T-cell (primary cell): ENCODE measurements at regions of chr12 and their contacts with region 1.

Region 1: DNA sequence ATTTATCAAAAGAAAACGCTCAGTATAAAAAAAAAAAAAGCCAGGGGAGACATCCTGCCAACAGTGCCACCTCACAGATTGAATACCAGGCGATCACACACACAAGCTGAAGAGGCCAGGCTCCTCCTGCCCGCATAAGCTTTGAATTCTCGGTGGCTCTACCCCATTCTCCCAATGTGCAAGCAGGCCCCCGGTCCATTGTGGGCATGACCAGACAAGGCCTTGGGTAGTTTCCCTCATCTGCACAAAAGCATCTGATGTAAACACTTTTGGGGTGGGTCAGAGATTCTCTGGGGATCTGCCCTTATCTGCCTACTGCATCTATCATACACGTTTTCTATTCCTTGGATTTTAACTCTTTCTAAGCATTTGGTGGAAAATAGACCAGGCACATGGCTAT is 16.2 kb downstream of the KLRF2 start:
- DNase-seq: no peak
- ATAC-seq: no peak
- H3K4me3 ChIP-seq: no peak overlapping the region
- H3K4me3 Mint-ChIP-seq: no peak overlapping the region
- H3K27ac ChIP-seq: no peak overlapping the region
- H3K27ac Mint-ChIP-seq: no peak overlapping the region
- H3K4me1 ChIP-seq: no peaks in the 10 kb centered on the region
- H3K4me1 Mint-ChIP-seq: peaks cover 1 to 5% (median 3%) of the 10 kb centered on the region in 3 donors
- H3K27me3 ChIP-seq: no peaks in the 10 kb centered on the region
- H3K27me3 Mint-ChIP-seq: peaks cover 0 to 7% of the 10 kb centered on the region in 2 donors

Region 2: DNA sequence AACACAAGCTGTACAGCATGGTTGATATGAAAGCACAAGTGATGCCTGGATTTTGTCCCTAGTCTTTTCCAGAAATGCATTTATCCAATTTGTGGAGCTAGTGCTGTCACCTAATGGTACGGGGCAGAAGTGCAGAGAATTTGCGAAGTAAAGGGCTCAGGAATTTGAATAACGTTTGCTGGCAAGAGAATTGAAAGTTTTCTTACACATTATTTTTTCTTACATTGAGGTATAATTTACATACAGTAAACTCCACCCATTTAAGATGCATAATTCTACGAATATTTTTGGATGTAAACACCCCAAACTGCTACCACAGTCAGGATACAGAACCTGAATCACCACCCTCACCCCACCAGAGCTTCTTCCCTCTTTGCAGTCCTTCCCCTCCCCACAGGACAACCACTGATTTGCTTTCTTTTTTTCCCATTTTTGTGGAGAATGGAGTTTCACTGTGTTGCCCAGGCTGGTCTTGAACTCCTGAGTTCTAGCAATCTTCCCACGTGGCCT is 1288.4 kb before region 1 on chr12:
- CTCF ChIA-PET with region 1: no interaction called
- POLR2A ChIA-PET with region 1: no interaction called
- DNase-seq: peak in 1 of 35 experiments; percentile 34
- ATAC-seq: peak in 1 of 4 experiments; percentile 36
- H3K4me3 ChIP-seq: no peak overlapping the region
- H3K4me3 Mint-ChIP-seq: peak overlapping the region; percentile 47 to 75 (median 64)
- H3K27ac ChIP-seq: no peak overlapping the region
- H3K27ac Mint-ChIP-seq: no peak overlapping the region
- H3K4me1 ChIP-seq: peaks cover 0 to 4% of the 10 kb centered on the region in 2 experiments
- H3K4me1 Mint-ChIP-seq: peaks cover 11% of the 10 kb centered on the region in 3 donors
- H3K27me3 ChIP-seq: peaks cover 0 to 9% of the 10 kb centered on the region in 2 experiments
- H3K27me3 Mint-ChIP-seq: peaks cover 5 to 9% of the 10 kb centered on the region in 2 donors

Region 3: DNA sequence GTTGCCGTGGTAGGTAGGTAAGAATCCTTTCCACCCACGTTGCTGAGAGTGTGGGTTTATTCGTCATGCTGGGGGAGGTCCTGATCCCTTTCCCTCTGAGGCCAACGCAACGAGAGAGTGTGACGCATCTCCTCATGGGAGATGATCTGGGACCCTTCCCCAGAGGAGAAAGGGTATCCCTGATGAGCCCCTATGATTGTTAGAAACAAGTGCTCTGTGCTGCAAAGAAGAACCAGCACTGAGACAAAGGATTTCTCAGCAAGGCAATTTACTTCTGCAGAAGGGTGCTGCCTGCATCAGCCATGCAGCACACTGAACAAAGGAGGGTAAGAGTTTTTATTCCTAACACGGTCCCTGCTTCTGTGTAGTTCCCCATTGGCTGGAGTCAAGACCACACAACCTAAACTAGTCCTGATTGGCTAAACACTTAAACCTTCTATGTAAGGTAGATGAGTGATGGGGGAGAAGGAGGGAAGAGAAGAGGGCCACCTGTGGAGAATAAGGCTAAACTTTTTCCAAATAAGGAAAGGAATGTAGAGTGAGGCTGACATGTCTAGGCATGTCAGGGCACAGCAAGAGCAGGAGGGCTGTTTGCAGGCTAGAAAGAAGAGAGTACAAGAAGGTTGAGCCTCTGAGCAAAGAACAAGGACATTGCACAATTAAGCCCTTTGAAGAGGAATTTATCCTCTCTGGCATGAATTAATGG is 13.3 kb after region 1 on chr12:
- CTCF ChIA-PET with region 1: interaction called in 1 of 2 experiments, 7 read pairs
- POLR2A ChIA-PET with region 1: interaction called in 1 of 2 experiments, 11 read pairs
- DNase-seq: no peak
- ATAC-seq: no peak
- H3K4me3 ChIP-seq: no peak overlapping the region
- H3K4me3 Mint-ChIP-seq: no peak overlapping the region
- H3K27ac ChIP-seq: no peak overlapping the region
- H3K27ac Mint-ChIP-seq: peak overlapping the region in 1 of 2 donors; percentile 74
- H3K4me1 ChIP-seq: peaks cover 7 to 17% of the 10 kb centered on the region in 2 experiments
- H3K4me1 Mint-ChIP-seq: peaks cover 34 to 40% (median 35%) of the 10 kb centered on the region in 3 donors
- H3K27me3 ChIP-seq: no peaks in the 10 kb centered on the region
- H3K27me3 Mint-ChIP-seq: no peaks in the 10 kb centered on the region

Region 4: GRCh38 chr12:9925708-9926393 is 28.3 kb after region 1 on chr12:
- CTCF ChIA-PET with region 1: no interaction called
- POLR2A ChIA-PET with region 1: interaction called in 1 of 2 experiments, 15 read pairs
- DNase-seq: peak in 11 of 35 experiments; percentile 2 to 68 (median 15)
- ATAC-seq: peak in 3 of 4 experiments; percentile 48 to 66 (median 63)
- H3K4me3 ChIP-seq: peak overlapping the region; percentile 16 to 38
- H3K4me3 Mint-ChIP-seq: peak overlapping the region; percentile 47 to 72 (median 60)
- H3K27ac ChIP-seq: no peak overlapping the region
- H3K27ac Mint-ChIP-seq: no peak overlapping the region
- H3K4me1 ChIP-seq: peaks cover 2 to 3% of the 10 kb centered on the region in 2 experiments
- H3K4me1 Mint-ChIP-seq: peaks cover 13 to 25% (median 15%) of the 10 kb centered on the region in 3 donors
- H3K27me3 ChIP-seq: no peaks in the 10 kb centered on the region
- H3K27me3 Mint-ChIP-seq: peaks cover 4 to 9% of the 10 kb centered on the region in 2 donors